Thyroid gland (tissue), 4 donors: ENCODE measurements at regions of chr15 and their contacts with region 1.

Region 1: GRCh38 chr15:71448688-71449114 is 333.4 kb downstream of the THSD4 start:
- DNase-seq: peak; percentile 12 to 33
- H3K4me3 ChIP-seq: no peak overlapping the region
- H3K27ac ChIP-seq: no peak overlapping the region
- H3K4me1 ChIP-seq: no peaks in the 10 kb centered on the region
- H3K27me3 ChIP-seq: no peaks in the 10 kb centered on the region
- CTCF ChIP-seq: peak; percentile 67 to 89 (median 80)
- POLR2A ChIP-seq: no peak

Region 2: DNA sequence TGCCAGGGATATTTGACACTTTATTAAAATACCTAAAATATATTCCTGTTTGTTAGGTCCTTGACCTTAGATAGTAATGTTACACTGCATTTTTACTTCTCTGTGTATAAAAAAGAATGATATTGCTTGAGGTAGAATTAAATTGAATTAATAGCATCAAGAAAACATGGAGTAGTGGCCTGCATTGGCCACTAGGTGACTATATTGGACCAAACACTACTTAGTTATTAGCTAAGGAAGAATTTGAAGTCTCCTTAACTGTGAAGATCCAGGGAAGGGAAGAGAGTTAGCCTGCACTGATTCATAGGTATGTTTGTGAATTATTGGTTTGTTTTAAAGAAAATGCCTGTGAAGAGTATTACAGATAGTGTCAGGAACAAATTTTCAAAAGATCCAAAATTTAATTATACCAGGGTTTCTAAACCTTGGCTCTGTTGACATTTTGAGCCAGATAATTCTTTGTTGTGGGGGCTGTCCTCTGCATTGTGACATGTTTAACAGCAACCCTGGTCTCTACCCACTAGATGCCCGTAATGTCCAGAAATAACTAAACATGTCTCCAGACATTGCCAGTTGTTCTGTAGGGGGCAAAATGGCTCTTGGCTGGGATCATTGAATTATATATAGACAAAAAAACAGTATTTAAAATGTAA is 437.1 kb before region 1 on chr15:
- intact Hi-C with region 1: loop called (anchors 10 kb)
- DNase-seq: peak; percentile 48 to 49
- H3K4me3 ChIP-seq: no peak overlapping the region
- H3K27ac ChIP-seq: no peak overlapping the region
- H3K4me1 ChIP-seq: no peaks in the 10 kb centered on the region
- H3K27me3 ChIP-seq: no peaks in the 10 kb centered on the region
- CTCF ChIP-seq: peak; percentile 58 to 92 (median 73)
- POLR2A ChIP-seq: no peak